Activated B cell treated with CpG ODN at 0.5 μM for 24 hours (primary cell): ENCODE measurements at regions of chr12 and their contacts with region 1.

Region 1: DNA sequence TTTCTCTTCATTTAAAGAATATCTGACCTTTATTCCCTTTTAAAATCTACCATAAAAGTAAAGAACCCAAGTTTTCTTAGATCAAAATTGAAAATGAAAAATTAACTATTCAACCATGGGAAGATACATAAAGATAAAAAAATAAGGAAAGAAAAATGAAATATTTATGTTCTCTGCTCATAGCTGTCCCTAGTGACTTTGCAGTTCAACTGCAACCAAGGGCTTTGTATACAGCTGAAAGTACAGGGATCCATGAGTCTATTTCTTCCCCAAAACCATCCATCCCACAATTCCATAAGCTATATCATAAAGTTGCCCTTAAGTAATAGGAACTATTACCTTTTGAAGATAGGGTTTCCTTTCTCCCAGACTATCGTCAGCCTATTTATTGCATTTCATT is 113.1 kb downstream of the ITPR2 start:
- DNase-seq: no peak
- ATAC-seq: no peak
- H3K4me3 Mint-ChIP-seq: no peak overlapping the region
- H3K27ac Mint-ChIP-seq: no peak overlapping the region
- H3K4me1 Mint-ChIP-seq: peaks cover 11% of the 10 kb centered on the region
- H3K27me3 Mint-ChIP-seq: no peaks in the 10 kb centered on the region
- CTCF ChIP-seq: no peak

Region 2: DNA sequence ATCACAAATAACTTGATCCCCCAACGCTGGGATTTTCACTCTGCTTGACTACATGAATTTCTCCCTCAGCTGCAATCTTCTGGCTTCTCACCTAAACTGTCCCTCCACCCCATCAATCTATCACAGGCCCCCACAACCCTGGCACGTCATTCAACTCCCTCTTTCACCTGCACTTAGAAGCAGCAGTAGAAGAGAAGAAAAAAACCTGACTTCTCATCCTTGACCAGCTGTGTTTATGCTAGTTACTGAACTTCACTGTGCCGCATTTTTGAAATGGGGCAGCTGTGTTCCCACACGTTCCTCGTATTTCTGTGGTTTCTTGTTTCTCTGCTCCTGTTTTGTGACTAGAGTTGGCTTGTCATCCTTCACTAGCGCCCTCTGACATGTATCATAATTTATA is 78.2 kb after region 1 on chr12:
- CTCF ChIA-PET with region 1: no interaction called
- POLR2A ChIA-PET with region 1: interaction called, 11 read pairs
- intact Hi-C with region 1: no loop called
- DNase-seq: no peak
- ATAC-seq: no peak
- H3K4me3 Mint-ChIP-seq: no peak overlapping the region
- H3K27ac Mint-ChIP-seq: peak overlapping the region; percentile 13
- H3K4me1 Mint-ChIP-seq: peaks cover 23% of the 10 kb centered on the region
- H3K27me3 Mint-ChIP-seq: no peaks in the 10 kb centered on the region
- CTCF ChIP-seq: no peak

Region 3: DNA sequence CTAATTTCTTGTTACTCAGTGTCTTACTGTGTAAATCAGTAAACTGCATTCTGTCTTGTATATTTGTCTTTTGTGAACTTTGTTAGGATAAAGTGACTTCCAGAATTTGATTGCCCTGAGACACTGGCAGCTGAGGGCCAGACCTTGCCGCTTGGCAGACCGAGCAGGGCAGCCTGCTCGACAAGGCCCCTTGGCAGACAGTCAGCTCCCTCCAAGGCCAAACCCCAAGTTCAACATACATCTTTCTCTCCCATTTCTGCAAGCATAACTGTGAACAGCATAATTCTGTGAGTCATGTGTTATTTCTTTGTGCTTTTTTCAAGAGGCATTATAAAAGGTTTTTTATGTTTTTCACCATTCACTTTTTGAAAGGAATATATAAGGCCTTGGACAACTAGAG is 573.6 kb after region 1 on chr12:
- CTCF ChIA-PET with region 1: no interaction called
- POLR2A ChIA-PET with region 1: no interaction called
- intact Hi-C with region 1: no loop called
- DNase-seq: no peak
- ATAC-seq: no peak
- H3K4me3 Mint-ChIP-seq: no peak overlapping the region
- H3K27ac Mint-ChIP-seq: no peak overlapping the region
- H3K4me1 Mint-ChIP-seq: peaks cover 16% of the 10 kb centered on the region
- H3K27me3 Mint-ChIP-seq: no peaks in the 10 kb centered on the region
- CTCF ChIP-seq: no peak